ENCODE measurements at regions of chr9 and their contacts with region 1.

Region 1: DNA sequence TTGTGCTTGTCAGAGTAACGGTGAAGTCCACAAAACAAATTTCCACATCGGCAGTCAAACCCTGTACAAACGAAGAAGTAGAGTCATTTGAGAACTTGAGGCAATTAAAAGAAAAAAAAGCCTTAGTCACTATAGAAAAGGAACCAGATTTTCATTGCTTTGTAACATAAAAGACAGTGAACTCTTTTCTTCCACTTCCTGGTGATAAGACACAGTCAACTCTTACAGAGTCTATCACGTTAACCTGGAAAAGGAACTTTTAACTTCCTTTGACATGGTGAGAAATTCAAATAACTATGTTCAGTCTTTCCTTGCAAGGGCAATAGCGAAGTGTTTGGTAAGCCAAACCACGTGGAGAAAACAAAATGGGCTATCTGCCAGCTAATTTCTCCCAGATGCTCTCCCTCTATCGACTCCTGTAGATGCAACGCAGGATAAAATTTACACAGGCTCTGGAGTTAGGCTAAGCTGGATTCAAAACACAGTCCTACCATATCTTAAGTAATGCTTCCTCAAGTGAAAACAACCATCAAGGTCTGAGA is 8.9 kb downstream of the ZFAND5 start:
- DNase-seq: peak in 3 of 7 donors; percentile 18 to 39 (median 30)
- H3K4me3 ChIP-seq: no peak overlapping the region
- H3K27ac ChIP-seq: peak overlapping the region in 3 of 5 donors; percentile 40 to 53 (median 44)
- H3K4me1 ChIP-seq: peaks cover 40 to 53% of the 10 kb centered on the region in 2 donors
- H3K27me3 ChIP-seq: no peaks in the 10 kb centered on the region
- CTCF ChIP-seq: no peak
- POLR2A ChIP-seq: no peak

Region 2: DNA sequence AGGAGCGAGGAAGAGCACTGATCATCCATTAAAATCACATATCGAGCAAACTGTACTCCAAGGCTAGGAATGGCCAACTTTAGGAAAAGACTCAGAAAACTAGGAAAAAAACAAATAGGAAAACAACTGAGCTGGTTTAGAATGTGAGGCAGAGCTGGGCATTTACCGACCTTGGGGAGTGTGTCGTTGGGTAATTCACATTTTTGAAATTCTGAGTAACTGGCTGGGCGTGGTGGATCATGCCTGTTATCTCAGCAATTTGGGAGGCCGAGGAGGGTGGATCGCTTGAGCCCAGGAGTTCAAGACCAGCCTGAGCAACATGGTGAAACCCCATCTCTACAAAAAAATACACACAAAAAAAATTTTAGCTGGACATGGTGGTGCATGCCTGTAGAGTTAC is 61.2 kb before region 1 on chr9:
- intact Hi-C with region 1: loop called in 1 of 2 experiments (anchors 5 kb)
- DNase-seq: peak; percentile 48 to 85 (median 80)
- H3K4me3 ChIP-seq: no peak overlapping the region
- H3K27ac ChIP-seq: peak overlapping the region; percentile 6 to 76 (median 58)
- H3K4me1 ChIP-seq: peaks cover 15 to 24% of the 10 kb centered on the region in 2 donors
- H3K27me3 ChIP-seq: no peaks in the 10 kb centered on the region
- CTCF ChIP-seq: no peak
- POLR2A ChIP-seq: no peak

Region 3: GRCh38 chr9:72473474-72474261 is 117.6 kb after region 1 on chr9:
- intact Hi-C with region 1: no loop called
- DNase-seq: no peak
- H3K4me3 ChIP-seq: no peak overlapping the region
- H3K27ac ChIP-seq: no peak overlapping the region
- H3K4me1 ChIP-seq: no peaks in the 10 kb centered on the region
- H3K27me3 ChIP-seq: no peaks in the 10 kb centered on the region
- CTCF ChIP-seq: no peak
- POLR2A ChIP-seq: no peak

Region 4: GRCh38 chr9:72817413-72817812 is 461.3 kb after region 1 on chr9:
- intact Hi-C with region 1: no loop called
- DNase-seq: no peak
- H3K4me3 ChIP-seq: no peak overlapping the region
- H3K27ac ChIP-seq: no peak overlapping the region
- H3K4me1 ChIP-seq: no peaks in the 10 kb centered on the region
- H3K27me3 ChIP-seq: no peaks in the 10 kb centered on the region
- CTCF ChIP-seq: no peak
- POLR2A ChIP-seq: no peak

Measured in adrenal gland (tissue), 19 donors.